CD8-positive, alpha-beta T cell (primary cell): ENCODE measurements at regions of chr17 and their contacts with region 1.

Region 1: DNA sequence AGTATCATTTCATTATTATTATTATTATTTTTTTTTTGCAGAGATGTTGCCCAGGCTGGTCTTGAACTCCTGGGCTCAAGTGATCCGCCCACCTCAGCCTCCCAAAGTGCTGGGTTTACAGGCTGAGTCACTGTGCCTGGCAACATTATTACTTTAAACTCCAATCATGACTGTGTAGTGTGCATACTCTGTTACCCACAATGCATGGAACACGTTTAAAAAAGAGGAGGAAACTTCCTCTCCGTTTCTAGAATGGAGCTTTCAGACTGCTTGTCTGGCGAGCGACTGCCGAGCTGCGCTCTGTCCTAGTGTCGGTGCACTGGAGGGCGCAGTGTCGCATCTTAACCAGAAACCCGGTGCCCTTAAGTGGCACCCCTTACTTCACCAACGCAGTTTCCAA is 22.1 kb upstream of the FASN start:
- DNase-seq: peak in 3 of 9 experiments; percentile 26 to 76 (median 40)
- ATAC-seq: peak; percentile 88
- H3K4me3 ChIP-seq: no peak overlapping the region
- H3K4me3 Mint-ChIP-seq: peak overlapping the region; percentile 56
- H3K27ac ChIP-seq: no peak overlapping the region
- H3K27ac Mint-ChIP-seq: peak overlapping the region; percentile 87
- H3K4me1 ChIP-seq: peaks cover 58% of the 10 kb centered on the region
- H3K4me1 Mint-ChIP-seq: peaks cover 59% of the 10 kb centered on the region
- H3K27me3 ChIP-seq: no peaks in the 10 kb centered on the region
- H3K27me3 Mint-ChIP-seq: no peaks in the 10 kb centered on the region
- CTCF ChIP-seq: peak; percentile 33

Region 2: DNA sequence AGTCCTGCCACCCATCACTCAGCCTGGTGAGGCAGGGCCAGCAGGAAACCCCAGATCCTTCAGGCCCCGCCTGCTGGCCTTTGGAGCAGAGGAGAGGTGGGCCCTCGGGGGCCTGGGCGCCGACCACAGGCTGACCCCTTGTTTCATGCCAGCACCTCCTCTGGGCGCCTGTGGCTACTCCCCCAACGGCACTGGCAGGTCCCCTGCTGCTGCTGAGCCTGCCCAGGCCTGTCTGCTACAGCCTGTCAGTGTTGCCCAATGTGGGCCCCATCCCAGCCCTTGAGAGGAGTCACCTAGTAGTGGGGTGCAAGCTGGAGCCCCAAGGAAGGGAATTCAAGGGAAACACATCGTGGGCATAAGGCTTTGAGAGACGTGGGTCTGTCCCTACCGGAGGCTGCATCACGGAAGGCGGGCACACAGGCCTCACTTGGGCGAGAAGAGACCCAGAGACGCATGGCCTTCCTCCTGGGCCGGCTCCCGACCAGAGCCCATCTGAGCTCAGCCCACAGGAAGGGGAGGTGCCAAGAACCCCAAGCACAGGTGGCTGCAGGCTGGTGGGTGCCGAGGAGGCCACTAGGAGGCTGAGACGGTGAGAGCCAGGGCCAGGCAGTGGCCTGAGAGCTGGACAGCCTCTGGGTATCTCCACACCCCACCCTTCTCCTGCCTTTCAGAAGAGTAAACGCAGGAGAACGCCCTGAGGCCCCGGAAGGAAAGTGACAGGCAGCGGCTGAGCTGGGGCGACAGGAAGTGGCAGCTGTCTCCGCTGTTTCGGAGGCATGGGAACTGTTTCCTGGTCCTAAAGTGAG is 14.1 kb before region 1 on chr17:
- CTCF ChIA-PET with region 1: interaction called, 10 read pairs
- POLR2A ChIA-PET with region 1: interaction called, 12 read pairs
- intact Hi-C with region 1: loop called in 1 of 2 experiments (anchors 1 kb)
- DNase-seq: peak in 8 of 9 experiments; percentile 38 to 80 (median 60)
- ATAC-seq: peak; percentile 65
- H3K4me3 ChIP-seq: peak overlapping the region; percentile 59 to 64
- H3K4me3 Mint-ChIP-seq: peak overlapping the region; percentile 87
- H3K27ac ChIP-seq: peak overlapping the region; percentile 65 to 89
- H3K27ac Mint-ChIP-seq: peak overlapping the region; percentile 96
- H3K4me1 ChIP-seq: peaks cover 22% of the 10 kb centered on the region
- H3K4me1 Mint-ChIP-seq: peaks cover 23% of the 10 kb centered on the region
- H3K27me3 ChIP-seq: no peaks in the 10 kb centered on the region
- H3K27me3 Mint-ChIP-seq: no peaks in the 10 kb centered on the region
- CTCF ChIP-seq: peak; percentile 28